ENCODE measurements at regions of chr11 and their contacts with region 1.

Region 1: DNA sequence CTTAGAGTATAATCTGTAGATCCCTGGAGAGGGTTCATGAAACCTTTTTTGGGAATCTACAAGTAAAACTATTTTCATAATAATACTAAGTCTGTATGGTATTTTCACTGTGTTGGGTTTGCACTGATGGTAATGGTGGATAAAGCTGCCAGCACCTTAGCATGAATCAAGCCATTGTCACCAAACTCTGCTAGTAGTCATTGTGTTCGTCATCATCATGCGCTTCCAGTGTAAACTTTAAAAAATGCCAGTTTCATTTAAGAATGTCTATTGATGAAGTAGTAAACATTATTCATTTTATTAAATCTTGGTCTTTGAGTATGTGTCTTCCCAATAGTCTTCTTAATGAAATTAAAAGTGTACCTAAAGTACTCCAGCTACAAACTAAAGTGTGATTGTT is 15.0 kb downstream of the ALKBH3 start:
- DNase-seq: no peak
- ATAC-seq: no peak
- H3K4me3 ChIP-seq: no peak overlapping the region
- H3K27ac ChIP-seq: no peak overlapping the region
- H3K4me1 ChIP-seq: no peaks in the 10 kb centered on the region
- H3K27me3 ChIP-seq: no peaks in the 10 kb centered on the region
- CTCF ChIP-seq: no peak
- POLR2A ChIP-seq: no peak

Region 2: DNA sequence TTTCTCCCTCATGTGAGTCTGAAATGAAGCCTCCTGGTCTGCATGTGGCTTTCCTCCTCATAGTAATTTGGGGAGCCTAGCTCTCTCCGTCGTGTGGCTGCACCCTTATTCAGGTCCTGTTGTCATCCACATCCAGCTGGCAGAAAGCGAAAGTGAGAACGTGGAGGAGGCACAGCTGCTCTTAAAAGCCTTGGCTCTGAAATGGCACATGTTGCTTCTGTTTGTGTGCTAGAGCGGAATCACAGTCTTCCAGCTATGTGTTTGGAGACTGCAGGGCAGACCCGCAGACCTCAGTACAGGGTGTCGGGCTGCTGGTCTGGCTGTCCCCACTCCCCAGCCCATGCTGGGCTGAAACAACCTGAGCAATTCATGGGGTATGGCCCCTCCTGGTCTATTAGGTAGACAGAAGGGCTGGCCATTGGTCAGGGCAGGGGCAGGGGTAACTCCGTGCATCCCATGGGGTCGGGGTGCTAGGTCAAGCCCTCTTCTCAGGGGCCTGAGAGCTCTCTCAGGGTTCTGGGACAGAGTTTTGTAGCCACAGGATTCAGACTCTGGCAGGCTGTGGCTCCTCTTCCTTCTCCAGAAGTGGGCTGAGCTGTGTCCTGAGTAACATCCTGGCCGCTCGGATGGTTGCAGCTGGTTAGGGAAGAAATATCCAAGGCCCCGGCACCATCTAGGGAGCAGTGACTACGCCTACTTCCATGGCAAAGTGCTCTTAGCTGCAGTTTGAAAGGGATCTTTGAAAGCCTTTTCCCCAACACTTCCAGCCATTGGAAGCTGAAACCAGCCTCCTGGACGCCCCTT is 97.4 kb after region 1 on chr11:
- in situ Hi-C with region 1: no loop called
- intact Hi-C with region 1: loop called (anchors 5 kb)
- DNase-seq: peak in 1 of 2 donors; percentile 40
- ATAC-seq: peak; percentile 60 to 77
- H3K4me3 ChIP-seq: peak overlapping the region in 3 of 4 donors; percentile 5 to 35 (median 11)
- H3K27ac ChIP-seq: peak overlapping the region in 3 of 4 donors; percentile 7 to 64 (median 61)
- H3K4me1 ChIP-seq: peaks cover 12 to 31% of the 10 kb centered on the region in 2 donors
- H3K27me3 ChIP-seq: no peaks in the 10 kb centered on the region
- CTCF ChIP-seq: no peak
- POLR2A ChIP-seq: no peak

Region 3: GRCh38 chr11:44036811-44037657 is 141.4 kb after region 1 on chr11:
- in situ Hi-C with region 1: loop called in 3 of 4 experiments (anchors 10 kb)
- intact Hi-C with region 1: loop called (anchors 1 kb)
- DNase-seq: peak; percentile 38 to 63
- ATAC-seq: peak; percentile 63 to 83
- H3K4me3 ChIP-seq: no peak overlapping the region
- H3K27ac ChIP-seq: peak overlapping the region in 2 of 4 donors; percentile 37 to 50
- H3K4me1 ChIP-seq: peaks cover under 1 to 5% of the 10 kb centered on the region in 2 donors
- H3K27me3 ChIP-seq: peaks cover 0 to 5% (median 5%) of the 10 kb centered on the region in 3 donors
- CTCF ChIP-seq: peak; percentile 47 to 75 (median 61)
- POLR2A ChIP-seq: no peak

Region 4: GRCh38 chr11:44047931-44048431 is 152.4 kb after region 1 on chr11 and contains the start of gene ACCSL:
- in situ Hi-C with region 1: loop called in 1 of 4 experiments (anchors 10 kb)
- intact Hi-C with region 1: no loop called
- DNase-seq: no peak
- ATAC-seq: no peak
- H3K4me3 ChIP-seq: no peak within 1 kb of the TSS
- H3K27ac ChIP-seq: no peak within 1 kb of the TSS
- H3K4me1 ChIP-seq: no peaks in the 10 kb centered on the region
- H3K27me3 ChIP-seq: no peaks in the 10 kb centered on the region
- CTCF ChIP-seq: no peak
- POLR2A ChIP-seq: no peak
- total RNA-seq, gene ACCSL: not detected